Breast epithelium (tissue), 4 donors: ENCODE measurements at regions of chr11 and their contacts with region 1.

Region 1: GRCh38 chr11:83097429-83098075 is 25.9 kb upstream of the RAB30 start:
- DNase-seq: no peak
- H3K4me3 ChIP-seq: no peak overlapping the region
- H3K27ac ChIP-seq: no peak overlapping the region
- H3K4me1 ChIP-seq: no peaks in the 10 kb centered on the region
- H3K27me3 ChIP-seq: no peaks in the 10 kb centered on the region
- CTCF ChIP-seq: no peak
- POLR2A ChIP-seq: no peak

Region 2: GRCh38 chr11:83162377-83162776 is 64.8 kb after region 1 on chr11:
- intact Hi-C with region 1: loop called (anchors 2 kb)
- DNase-seq: no peak
- H3K4me3 ChIP-seq: peak overlapping the region in 1 of 3 donors; percentile 2
- H3K27ac ChIP-seq: peak overlapping the region; percentile 36 to 100
- H3K4me1 ChIP-seq: peaks cover 4 to 13% of the 10 kb centered on the region in 2 donors
- H3K27me3 ChIP-seq: no peaks in the 10 kb centered on the region
- CTCF ChIP-seq: no peak
- POLR2A ChIP-seq: no peak

Region 3: GRCh38 chr11:84648471-84648870 is 1550.9 kb after region 1 on chr11:
- intact Hi-C with region 1: no loop called
- DNase-seq: no peak
- H3K4me3 ChIP-seq: no peak overlapping the region
- H3K27ac ChIP-seq: no peak overlapping the region
- H3K4me1 ChIP-seq: no peaks in the 10 kb centered on the region
- H3K27me3 ChIP-seq: no peaks in the 10 kb centered on the region
- CTCF ChIP-seq: no peak
- POLR2A ChIP-seq: no peak